Activated CD8-positive, alpha-beta T cell treated with anti-CD3 and anti-CD28 coated beads, Interleukin-2, amount 10 ng/mL, durations not matched to agents 7 days and 5 days (primary cell): ENCODE measurements at regions of chr11 and their contacts with region 1.

Region 1: GRCh38 chr11:128290106-128290840 is 297.1 kb downstream of the ETS1 start:
- DNase-seq: peak; percentile 87
- ATAC-seq: peak; percentile 76
- H3K4me3 Mint-ChIP-seq: peak overlapping the region; percentile 96
- H3K27ac Mint-ChIP-seq: peak overlapping the region; percentile 84
- H3K4me1 Mint-ChIP-seq: peaks cover 90% of the 10 kb centered on the region
- H3K27me3 Mint-ChIP-seq: no peaks in the 10 kb centered on the region

Region 2: GRCh38 chr11:128302425-128303186 is 12.3 kb after region 1 on chr11:
- CTCF ChIA-PET with region 1: interaction called, 42 read pairs
- POLR2A ChIA-PET with region 1: interaction called, 125 read pairs
- DNase-seq: peak; percentile 90
- ATAC-seq: peak; percentile 90
- H3K4me3 Mint-ChIP-seq: peak overlapping the region; percentile 89
- H3K27ac Mint-ChIP-seq: peak overlapping the region; percentile 96
- H3K4me1 Mint-ChIP-seq: peaks cover 79% of the 10 kb centered on the region
- H3K27me3 Mint-ChIP-seq: no peaks in the 10 kb centered on the region

Region 3: DNA sequence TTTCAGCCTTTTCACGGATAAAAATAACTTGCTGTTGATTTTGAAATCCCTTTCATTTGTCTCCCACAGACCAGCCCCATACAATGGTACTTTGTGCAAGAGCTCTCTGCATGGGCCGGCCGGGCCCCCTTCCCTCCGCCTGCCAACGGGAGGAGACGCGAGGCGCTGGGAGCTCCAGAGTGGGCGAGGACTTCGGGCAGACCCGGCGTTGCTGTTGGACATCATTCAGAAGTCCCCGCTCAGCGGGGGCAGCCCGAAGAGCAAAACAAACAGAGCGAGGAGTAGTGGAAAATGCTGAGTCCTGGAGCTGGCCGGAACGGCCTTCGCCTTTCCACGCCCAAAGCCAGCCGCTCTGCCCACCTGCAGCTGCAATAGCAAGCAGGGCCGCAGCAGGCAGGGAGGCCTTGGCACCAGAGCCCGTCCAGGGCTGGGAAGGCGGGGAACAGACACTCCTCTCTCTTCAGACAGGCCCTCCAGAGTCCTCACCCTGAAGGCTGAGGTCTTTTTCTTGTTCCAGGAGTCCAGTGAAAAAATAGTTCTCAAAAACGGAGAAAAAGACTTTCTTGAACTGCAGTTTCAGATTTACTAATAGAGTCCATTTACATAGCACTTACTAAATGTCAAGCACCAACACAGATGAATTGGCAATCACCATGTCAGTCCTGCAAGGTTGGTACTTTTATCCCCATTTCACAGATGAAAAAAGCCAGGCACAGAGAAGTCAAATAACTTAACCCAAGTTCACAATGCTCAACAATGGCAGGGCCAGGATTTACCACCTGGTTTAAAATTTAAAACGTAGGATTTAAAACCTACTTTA is 161.6 kb after region 1 on chr11:
- CTCF ChIA-PET with region 1: interaction called, 11 read pairs
- POLR2A ChIA-PET with region 1: interaction called, 5 read pairs
- DNase-seq: no peak
- ATAC-seq: no peak
- H3K4me3 Mint-ChIP-seq: no peak overlapping the region
- H3K27ac Mint-ChIP-seq: peak overlapping the region; percentile 46
- H3K4me1 Mint-ChIP-seq: peaks cover 55% of the 10 kb centered on the region
- H3K27me3 Mint-ChIP-seq: no peaks in the 10 kb centered on the region

Region 4: GRCh38 chr11:128472128-128473089 is 182.1 kb after region 1 on chr11:
- CTCF ChIA-PET with region 1: interaction called, 23 read pairs
- POLR2A ChIA-PET with region 1: interaction called, 17 read pairs
- DNase-seq: peak; percentile 69
- ATAC-seq: peak; percentile 55
- H3K4me3 Mint-ChIP-seq: peak overlapping the region; percentile 56
- H3K27ac Mint-ChIP-seq: peak overlapping the region; percentile 85
- H3K4me1 Mint-ChIP-seq: peaks cover 98% of the 10 kb centered on the region
- H3K27me3 Mint-ChIP-seq: no peaks in the 10 kb centered on the region

Region 5: DNA sequence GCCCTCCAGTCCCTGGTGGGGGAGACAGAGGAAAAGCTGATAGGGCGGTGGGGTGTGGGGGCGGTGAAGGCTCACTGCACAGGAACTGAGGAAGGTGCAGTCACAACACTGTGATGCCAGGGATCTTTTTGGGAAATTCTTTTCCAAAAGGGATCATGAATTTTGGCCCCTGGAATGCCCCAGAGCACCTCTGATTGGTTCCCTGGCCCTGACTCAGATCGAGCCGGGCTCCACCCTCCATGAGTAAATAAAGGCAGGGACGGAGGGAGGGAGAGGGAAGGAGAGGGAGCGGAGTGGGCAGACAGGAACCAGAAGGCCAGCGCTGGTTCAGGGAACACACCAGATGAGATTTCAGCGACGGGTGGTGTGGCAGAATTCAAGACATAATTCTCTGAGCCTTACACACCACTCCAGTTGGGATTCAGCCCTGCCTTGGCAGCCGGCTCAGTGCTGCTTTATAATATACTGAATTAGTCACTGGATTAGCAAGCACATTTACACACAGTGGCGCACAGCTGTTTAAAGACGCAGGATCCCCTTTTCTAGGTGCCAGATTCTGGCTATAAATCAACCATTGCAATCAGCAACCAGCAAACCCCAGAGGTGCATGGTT is 216.8 kb after region 1 on chr11:
- CTCF ChIA-PET with region 1: interaction called, 61 read pairs
- POLR2A ChIA-PET with region 1: interaction called, 15 read pairs
- DNase-seq: no peak
- ATAC-seq: peak; percentile 7
- H3K4me3 Mint-ChIP-seq: peak overlapping the region; percentile 78
- H3K27ac Mint-ChIP-seq: peak overlapping the region; percentile 96
- H3K4me1 Mint-ChIP-seq: peaks cover 97% of the 10 kb centered on the region
- H3K27me3 Mint-ChIP-seq: no peaks in the 10 kb centered on the region

Region 6: DNA sequence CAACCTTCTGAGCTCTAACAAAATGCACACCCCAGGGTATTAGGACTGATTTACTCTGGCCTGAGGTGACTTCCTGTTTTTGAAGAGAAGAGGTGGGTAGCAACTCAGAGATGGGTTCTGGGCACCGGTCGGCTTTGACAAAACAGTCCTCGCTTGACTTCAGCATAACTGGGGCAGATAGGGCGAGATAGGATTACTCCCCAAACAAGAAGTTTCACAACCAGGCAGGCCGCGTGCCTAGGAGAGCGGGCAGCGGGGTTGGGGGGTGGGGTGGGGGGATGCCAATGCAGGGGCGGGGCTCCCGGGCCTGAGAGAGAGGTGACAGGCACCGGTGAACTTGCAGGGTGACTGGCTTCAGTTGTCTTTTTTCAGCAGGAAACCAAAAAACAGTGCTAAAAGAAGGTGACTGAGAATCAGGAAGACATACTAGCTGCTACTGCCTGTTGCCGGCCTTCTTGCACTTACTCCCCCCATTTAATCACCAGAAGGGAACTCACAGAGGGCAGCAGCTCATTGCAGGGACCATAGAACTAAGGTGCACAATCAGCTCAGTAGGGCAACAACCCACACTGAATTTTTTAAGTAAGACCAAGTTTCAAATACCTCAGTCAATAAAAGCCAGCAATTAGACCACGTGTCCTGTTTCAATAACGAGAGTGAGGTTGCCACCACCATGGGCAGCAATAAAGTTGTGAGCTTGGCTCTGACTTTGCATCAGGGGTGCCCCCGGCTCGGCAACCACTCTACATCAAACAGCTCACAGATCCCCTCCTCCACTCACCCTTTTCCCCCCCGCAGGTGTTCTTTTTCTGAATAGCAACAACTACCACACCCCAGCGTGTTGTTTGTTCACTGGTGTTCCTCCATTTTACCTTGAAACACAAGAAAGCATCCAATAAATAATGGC is 334.2 kb after region 1 on chr11:
- CTCF ChIA-PET with region 1: interaction called, 204 read pairs
- POLR2A ChIA-PET with region 1: interaction called, 43 read pairs
- DNase-seq: peak; percentile 73
- ATAC-seq: peak; percentile 52
- H3K4me3 Mint-ChIP-seq: peak overlapping the region; percentile 69
- H3K27ac Mint-ChIP-seq: peak overlapping the region; percentile 97
- H3K4me1 Mint-ChIP-seq: peaks cover 88% of the 10 kb centered on the region
- H3K27me3 Mint-ChIP-seq: no peaks in the 10 kb centered on the region